ENCODE measurements at regions of chr1 and their contacts with region 1.

Region 1: GRCh38 chr1:155323798-155324610 is 3.3 kb downstream of the RUSC1 start:
- DNase-seq: peak; percentile 94 to 96
- H3K4me3 ChIP-seq: peak overlapping the region; percentile 72 to 86
- H3K27ac ChIP-seq: peak overlapping the region; percentile 97 to 99
- H3K4me1 ChIP-seq: peaks cover 8 to 17% of the 10 kb centered on the region in 2 donors
- H3K27me3 ChIP-seq: no peaks in the 10 kb centered on the region
- CTCF ChIP-seq: peak in 2 of 4 experiments; percentile 2 to 16
- POLR2A ChIP-seq: peak; percentile 11 to 80

Region 2: DNA sequence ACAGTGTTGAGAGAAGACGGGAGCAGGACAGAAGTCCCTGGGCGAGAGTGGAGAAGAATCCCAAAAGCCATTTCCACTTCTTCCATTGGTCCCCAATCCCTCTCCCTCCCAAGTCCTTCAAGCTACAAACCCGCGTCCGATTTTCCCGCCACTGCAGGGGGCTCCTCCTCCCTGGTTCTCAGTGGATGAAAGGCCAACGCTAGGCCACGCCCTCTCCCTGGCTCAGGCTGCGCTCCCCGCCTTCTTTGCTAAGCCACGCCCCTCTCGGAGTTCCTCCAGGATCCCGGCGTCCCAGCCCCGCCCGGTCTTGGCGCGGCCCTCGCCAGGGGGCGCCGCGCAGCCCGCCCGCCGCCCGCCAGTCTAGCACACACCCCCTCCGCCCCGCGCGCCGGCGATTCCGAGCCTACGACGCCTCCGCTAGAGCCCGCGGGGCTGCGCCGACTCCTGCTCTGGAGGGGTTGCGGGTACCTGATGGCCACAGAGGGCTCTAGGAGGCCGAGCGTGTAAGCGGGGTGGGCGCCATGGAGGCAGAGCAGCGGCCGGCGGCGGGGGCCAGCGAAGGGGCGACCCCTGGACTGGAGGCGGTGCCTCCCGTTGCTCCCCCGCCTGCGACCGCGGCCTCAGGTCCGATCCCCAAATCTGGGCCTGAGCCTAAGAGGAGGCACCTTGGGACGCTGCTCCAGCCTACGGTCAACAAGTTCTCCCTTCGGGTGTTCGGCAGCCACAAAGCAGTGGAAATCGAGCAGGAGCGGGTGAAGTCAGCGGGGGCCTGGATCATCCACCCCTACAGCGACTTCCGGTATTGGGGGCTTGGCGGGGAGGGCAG is 46.7 kb before region 1 on chr1 and contains the start of gene HCN3:
- intact Hi-C with region 1: loop called (anchors 5 kb)
- DNase-seq: peak; percentile 98 to 99
- H3K4me3 ChIP-seq: peak within 1 kb of the TSS; percentile 50 to 72
- H3K27ac ChIP-seq: peak within 1 kb of the TSS; percentile 72 to 73
- H3K4me1 ChIP-seq: peaks cover 3 to 10% of the 10 kb centered on the region in 2 donors
- H3K27me3 ChIP-seq: no peaks in the 10 kb centered on the region
- CTCF ChIP-seq: peak; percentile 51 to 81 (median 80)
- POLR2A ChIP-seq: no peak
- total RNA-seq, gene HCN3: 4.2 to 5.5 TPM in 2 of 4 donors, not detected in the others